HEK293 (cell line): ENCODE measurements at regions of chr15 and their contacts with region 1.

Region 1: DNA sequence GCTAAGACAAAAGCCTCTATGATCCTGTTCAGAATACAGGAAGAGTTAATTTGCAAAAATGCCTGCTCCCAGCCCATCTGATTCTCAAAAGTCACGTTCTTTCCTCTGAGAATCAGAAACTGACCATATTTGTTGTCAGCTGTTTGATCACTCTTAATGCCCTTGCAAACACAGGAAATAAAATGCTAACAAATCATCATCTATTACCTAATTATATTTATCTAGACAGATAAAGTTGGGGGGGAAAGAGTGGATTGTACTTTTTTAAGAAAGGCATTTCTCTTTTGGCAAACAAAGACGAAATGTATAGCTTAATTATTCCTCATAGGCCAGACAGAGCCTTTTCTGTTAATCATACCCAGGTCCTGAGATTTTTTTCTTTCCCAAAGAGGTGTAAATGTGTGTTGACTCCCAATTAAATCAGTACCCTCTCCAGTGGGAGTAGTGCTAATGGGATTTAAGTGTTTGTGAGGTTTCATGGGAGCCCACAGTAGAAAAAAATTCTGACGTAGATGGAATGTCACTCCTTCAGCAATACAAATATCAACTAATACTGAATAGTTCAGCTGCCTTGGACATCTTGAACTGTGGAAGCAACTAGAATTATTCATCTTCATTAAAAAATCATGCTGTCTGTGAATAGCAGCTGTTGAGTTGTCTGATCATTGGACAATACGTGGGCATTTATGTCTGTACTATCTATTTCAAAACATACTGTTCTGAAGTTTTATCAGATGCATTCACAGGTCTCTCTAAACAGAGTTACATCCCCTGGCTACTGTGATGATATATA is 22.5 kb upstream of the BNIP2 start:
- H3K4me3 ChIP-seq: no peak overlapping the region
- H3K27ac ChIP-seq: no peak overlapping the region
- H3K4me1 ChIP-seq: no peaks in the 10 kb centered on the region
- CTCF ChIP-seq: no peak

Region 2: DNA sequence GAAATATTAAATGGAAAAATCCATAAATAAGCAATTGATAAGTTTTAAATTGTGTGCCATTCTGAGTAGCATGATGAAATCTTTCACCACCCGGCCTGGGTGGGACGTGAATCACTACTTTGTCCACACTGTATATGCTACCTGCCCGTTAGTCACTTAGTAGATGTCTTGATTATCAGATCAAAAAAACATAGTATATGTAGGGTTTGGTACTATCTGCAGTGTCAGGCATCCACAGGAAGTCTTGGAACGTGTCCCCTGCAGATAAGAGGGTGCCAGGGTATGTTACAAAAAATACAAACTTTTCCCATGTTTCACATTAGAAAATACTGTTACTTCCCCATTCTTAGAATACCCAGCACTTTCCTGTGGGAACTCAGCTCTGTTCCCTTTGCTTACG is 238.4 kb before region 1 on chr15:
- CTCF ChIA-PET with region 1: no interaction called
- POLR2A ChIA-PET with region 1: no interaction called
- H3K4me3 ChIP-seq: no peak overlapping the region
- H3K27ac ChIP-seq: no peak overlapping the region
- H3K4me1 ChIP-seq: no peaks in the 10 kb centered on the region
- CTCF ChIP-seq: no peak

Region 3: GRCh38 chr15:59725172-59725486 is 13.5 kb after region 1 on chr15:
- CTCF ChIA-PET with region 1: interaction called, 12 read pairs
- POLR2A ChIA-PET with region 1: no interaction called
- H3K4me3 ChIP-seq: no peak overlapping the region
- H3K27ac ChIP-seq: no peak overlapping the region
- H3K4me1 ChIP-seq: no peaks in the 10 kb centered on the region
- CTCF ChIP-seq: no peak